ENCODE measurements at regions of chr1 and their contacts with region 1.

Region 1: DNA sequence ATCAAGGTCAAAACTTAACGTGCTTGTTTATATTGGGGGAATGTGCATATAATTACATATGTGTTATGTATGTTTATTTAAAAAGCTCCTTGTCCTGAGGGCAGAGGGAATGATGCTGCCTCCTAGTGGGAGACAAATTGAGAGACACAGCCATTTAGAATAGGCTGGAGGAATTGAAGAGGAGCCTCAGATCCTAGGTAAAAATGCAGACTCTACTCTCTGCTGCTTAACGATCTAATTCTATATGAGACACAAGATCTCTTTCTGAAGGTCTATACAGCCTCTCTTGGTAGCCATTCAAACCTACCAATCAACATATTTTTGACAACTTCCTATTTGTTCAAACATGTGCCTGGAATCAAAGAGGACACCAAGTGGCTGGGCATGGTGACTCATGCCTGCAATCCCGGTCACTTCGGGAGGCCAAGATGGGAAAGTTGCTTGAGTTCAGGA is 136.6 kb upstream of the ZNF648 start:
- DNase-seq: no peak
- H3K4me3 ChIP-seq: no peak overlapping the region
- H3K27ac ChIP-seq: peak overlapping the region; percentile 24 to 78
- H3K4me1 ChIP-seq: peaks cover 13% of the 10 kb centered on the region
- H3K27me3 ChIP-seq: no peaks in the 10 kb centered on the region
- CTCF ChIP-seq: peak in 1 of 3 donors; percentile 27
- EP300 ChIP-seq: no peak
- POLR2A ChIP-seq: no peak

Region 2: DNA sequence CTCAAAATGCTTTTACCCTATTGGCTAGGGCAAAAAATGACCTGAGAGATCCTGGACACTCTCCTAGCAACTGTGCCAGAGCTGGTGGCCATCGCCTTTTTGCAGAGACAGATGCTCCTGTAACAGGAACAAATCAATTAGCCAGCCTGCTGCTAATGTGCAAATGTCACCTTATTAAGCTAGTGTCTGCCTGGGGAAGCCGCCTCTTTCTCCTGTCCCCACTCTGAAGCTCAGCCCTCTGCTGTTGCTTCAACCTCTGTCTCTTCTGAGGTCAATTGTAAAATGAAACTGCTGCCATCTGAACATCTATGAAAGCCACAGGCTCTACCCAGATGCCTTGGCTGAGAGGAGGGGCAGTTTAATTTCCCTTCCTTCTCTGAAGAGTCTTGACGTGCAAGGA is 800.2 kb before region 1 on chr1:
- intact Hi-C with region 1: no loop called
- DNase-seq: no peak
- H3K4me3 ChIP-seq: no peak overlapping the region
- H3K27ac ChIP-seq: no peak overlapping the region
- H3K4me1 ChIP-seq: no peaks in the 10 kb centered on the region
- H3K27me3 ChIP-seq: no peaks in the 10 kb centered on the region
- CTCF ChIP-seq: no peak
- EP300 ChIP-seq: no peak
- POLR2A ChIP-seq: no peak

Region 3: DNA sequence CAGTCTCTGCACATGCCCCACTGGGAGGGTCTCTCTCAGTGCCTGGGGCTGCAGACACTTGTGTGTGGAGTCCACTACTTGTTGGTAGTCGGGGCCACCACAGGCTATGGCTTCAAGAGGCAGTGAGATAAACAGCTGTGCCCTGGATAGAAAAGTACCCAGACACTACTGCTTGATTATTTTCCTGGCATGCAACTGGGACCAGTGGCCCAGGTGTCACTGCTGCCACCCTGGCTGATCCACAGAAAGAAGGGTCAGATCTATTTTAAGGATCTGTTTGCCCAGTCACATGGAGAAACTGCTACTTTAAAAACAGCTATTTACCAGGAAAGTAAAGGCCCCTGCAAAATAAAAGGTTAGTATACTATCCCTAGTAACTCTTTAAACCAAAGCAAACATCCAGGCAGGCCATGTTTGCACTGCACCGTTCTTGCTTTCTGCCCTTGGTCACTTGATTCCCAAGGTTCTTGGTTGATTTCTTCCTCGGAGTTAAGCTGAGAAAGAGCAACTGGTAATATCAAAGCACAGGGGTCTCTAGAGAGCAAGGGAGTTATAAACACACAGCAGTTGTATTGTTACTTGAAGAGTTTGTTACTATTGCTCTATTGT is 93.6 kb after region 1 on chr1:
- intact Hi-C with region 1: loop called in 1 of 4 experiments (anchors 5 kb)
- DNase-seq: no peak
- H3K4me3 ChIP-seq: no peak overlapping the region
- H3K27ac ChIP-seq: no peak overlapping the region
- H3K4me1 ChIP-seq: no peaks in the 10 kb centered on the region
- H3K27me3 ChIP-seq: no peaks in the 10 kb centered on the region
- CTCF ChIP-seq: no peak
- EP300 ChIP-seq: no peak
- POLR2A ChIP-seq: no peak